Esophagus muscularis mucosa (tissue), 4 donors: ENCODE measurements at regions of chr5 and their contacts with region 1.

Region 1: DNA sequence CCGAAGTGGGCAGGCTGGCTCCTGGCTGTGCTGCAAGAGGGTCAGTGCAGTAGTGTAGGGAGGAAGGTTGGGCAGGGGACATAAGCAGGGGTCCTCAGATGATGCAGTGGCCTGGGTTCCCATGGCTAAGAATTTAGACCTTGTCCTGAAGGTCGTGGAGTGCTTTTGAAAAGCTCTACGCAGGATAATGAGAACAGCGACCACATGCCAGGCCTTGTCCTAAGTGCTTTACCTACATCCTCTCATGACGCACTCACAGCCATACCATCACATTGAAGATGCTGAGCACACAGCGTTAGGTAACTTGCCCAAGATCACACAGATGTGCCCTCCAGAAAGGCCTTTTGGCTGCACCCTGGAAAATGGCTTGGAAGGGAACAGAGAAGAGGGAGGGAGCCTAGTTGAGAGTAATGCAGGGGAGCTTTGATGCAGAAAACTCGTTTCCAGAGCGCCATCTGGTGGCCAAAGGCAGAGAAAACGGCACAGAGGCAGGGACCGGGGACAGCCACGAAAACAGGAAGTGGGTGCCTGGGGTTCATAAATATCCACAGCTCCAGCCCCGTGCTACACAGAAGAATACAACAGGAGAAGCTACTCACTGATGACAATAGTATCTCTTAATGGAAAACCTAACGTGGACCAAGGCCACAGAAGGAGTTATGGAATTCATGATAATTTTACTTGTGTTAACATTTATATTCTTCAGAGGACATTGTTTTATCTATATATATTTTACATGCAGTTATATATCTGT is 2.6 kb upstream of the PCDH12 start:
- DNase-seq: peak; percentile 98
- H3K4me3 ChIP-seq: no peak overlapping the region
- H3K27ac ChIP-seq: peak overlapping the region in 1 of 4 donors; percentile 1
- H3K4me1 ChIP-seq: peaks cover 29 to 44% (median 37%) of the 10 kb centered on the region in 4 donors
- H3K27me3 ChIP-seq: peaks cover 0 to 11% (median 0%) of the 10 kb centered on the region in 4 donors
- CTCF ChIP-seq: peak; percentile 83 to 91 (median 88)
- EP300 ChIP-seq: no peak
- POLR2A ChIP-seq: no peak

Region 2: DNA sequence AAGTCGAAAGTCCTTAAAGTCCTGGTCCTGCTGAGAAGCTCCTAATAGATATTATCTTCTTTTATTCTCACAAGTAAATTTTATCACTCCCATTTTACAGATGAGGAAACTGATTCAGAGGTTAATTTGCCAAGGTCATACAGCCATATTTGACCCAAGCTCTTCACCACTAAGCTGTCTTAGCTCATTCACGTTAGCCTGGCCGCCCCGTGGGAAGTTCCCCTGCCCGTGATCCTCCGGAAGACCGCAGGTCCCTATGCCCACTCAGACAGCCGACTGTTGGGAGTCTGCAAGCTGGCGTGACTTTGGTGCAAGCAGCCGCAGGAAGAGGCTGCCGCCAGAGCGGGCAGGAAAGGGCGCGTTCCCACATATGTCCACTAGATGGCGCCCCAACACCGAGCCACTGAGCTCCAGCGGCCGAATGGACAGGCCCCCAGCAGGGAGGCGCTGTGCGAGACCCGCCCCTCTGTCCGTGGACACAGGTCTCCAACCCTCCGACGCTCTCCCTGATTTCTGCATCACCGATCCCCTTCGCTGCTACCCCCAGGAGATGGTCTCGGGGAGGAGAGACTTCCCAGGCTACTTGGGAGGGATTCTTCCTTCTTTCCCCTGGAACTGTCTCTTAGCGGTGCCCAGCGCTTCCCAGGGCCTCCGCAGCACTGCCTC is 268.6 kb before region 1 on chr5:
- intact Hi-C with region 1: loop called (anchors 1 kb)
- DNase-seq: peak; percentile 93
- H3K4me3 ChIP-seq: peak overlapping the region; percentile 30 to 46 (median 37)
- H3K27ac ChIP-seq: no peak overlapping the region
- H3K4me1 ChIP-seq: peaks cover 9 to 15% (median 10%) of the 10 kb centered on the region in 4 donors
- H3K27me3 ChIP-seq: peaks cover 0 to 50% (median 0%) of the 10 kb centered on the region in 4 donors
- CTCF ChIP-seq: peak in 2 of 3 experiments; percentile 98
- EP300 ChIP-seq: no peak
- POLR2A ChIP-seq: no peak

Region 3: DNA sequence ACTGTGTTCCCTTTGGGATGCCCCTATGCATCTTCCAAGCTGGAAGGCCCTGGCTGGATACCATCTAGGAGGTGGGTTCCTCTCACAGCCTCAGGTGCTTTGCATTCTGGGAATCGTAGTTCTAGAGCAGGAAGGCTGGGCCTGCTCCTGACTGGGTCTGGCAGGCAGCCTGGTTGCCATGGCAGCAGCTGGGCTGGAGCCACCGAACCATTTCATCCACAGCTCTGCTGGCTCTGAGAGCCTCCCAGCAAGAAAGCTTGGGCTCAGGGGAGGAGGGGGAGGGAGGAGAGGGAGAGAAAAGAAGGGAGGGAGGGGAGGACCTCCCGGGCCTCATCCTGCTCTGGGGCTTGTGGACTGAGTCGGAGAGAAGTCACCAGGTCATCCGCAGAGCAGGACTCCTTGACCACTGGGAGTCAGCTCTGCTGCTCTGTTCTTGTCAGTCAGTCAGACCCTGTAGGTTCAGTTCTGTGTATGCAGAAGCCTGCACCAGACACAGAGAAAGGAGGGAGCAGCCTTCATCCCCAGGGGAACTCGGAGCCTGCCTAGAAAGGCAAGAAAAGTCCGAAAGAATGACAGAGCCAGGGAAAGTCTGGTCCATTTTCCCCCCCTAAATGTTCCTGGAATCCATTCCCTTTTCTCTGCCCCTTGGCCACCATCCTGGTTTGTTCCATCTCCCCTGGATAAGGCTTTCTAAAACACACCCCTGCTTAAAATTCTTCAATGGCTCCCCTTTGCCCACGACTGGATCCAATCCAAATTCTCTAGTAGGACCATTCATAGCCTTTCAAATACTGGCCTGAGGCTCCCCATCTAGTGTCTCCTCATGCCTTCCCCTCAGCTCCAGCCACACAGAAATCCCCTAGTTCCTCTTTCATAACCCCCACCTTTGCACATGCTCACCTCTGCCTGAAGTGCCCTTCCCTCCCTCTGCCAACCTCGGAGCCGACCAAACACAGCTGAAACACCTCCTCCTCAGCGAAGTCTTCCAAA is 213.2 kb before region 1 on chr5:
- intact Hi-C with region 1: no loop called
- DNase-seq: no peak
- H3K4me3 ChIP-seq: no peak overlapping the region
- H3K27ac ChIP-seq: peak overlapping the region in 1 of 4 donors; percentile 22
- H3K4me1 ChIP-seq: peaks cover 5 to 12% (median 11%) of the 10 kb centered on the region in 4 donors
- H3K27me3 ChIP-seq: peaks cover 0 to 31% (median under 1%) of the 10 kb centered on the region in 4 donors
- CTCF ChIP-seq: no peak
- EP300 ChIP-seq: no peak
- POLR2A ChIP-seq: no peak